ENCODE measurements at regions of chr3 and their contacts with region 1.

Region 1: GRCh38 chr3:43769471-43770425 is 79.0 kb downstream of the ABHD5 start:
- DNase-seq: peak; percentile 61
- ATAC-seq: peak; percentile 81
- H3K4me3 ChIP-seq: no peak overlapping the region
- H3K27ac ChIP-seq: no peak overlapping the region
- H3K4me1 ChIP-seq: peaks cover 14% of the 10 kb centered on the region
- H3K27me3 ChIP-seq: peaks cover 0 to 14% of the 10 kb centered on the region in 2 experiments; a peak in 2 of 5 replicates
- CTCF ChIP-seq: peak; percentile 84
- EP300 ChIP-seq: no peak
- POLR2A ChIP-seq: no peak
- RAD21 ChIP-seq: peak; percentile 54; the same call in 1 of the 2 replicates

Region 2: GRCh38 chr3:44198284-44199269 is 428.8 kb after region 1 on chr3:
- CTCF ChIA-PET with region 1: interaction called, 6 read pairs
- POLR2A ChIA-PET with region 1: no interaction called
- in situ Hi-C with region 1: loop called (anchors 5 kb)
- intact Hi-C with region 1: no loop called
- DNase-seq: peak; percentile 55
- ATAC-seq: peak; percentile 84
- H3K4me3 ChIP-seq: no peak overlapping the region
- H3K27ac ChIP-seq: no peak overlapping the region
- H3K4me1 ChIP-seq: no peaks in the 10 kb centered on the region
- H3K27me3 ChIP-seq: peaks cover 0 to 2% of the 10 kb centered on the region in 2 experiments; a peak in 1 of 5 replicates
- CTCF ChIP-seq: peak; percentile 84
- EP300 ChIP-seq: no peak
- POLR2A ChIP-seq: no peak
- RAD21 ChIP-seq: peak; percentile 71

Measured in HepG2 (cell line).